PC-9 (cell line): ENCODE measurements at regions of chr2 and their contacts with region 1.

Region 1: DNA sequence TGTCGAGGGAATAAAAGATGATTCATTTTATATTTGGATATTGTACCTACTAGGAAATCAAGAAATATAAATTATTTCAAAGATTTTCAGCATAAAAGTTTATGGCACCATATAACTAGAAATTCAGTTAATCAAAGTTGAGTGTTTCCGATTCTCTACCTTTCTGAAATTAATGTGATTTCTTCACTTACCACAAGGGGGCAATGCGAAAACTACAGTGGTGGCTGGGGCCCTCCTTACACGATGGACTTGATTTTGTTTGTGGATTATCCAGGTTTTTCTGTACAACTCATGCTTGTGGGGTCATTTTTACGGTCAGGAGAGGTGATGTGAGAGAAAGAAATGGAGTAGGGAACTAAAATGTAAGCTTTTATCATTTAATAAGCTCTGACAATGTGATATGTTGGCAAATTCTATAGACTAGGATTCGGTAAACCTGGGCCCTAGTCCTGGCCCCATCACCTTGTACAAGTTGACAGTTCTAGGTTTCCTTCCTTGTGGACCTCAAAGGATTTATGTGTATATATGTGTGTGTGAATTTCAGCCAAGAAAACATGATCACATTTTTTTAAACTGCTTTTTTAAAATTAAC is 47.6 kb downstream of the G6PC2 start:
- DNase-seq: no peak
- H3K4me3 ChIP-seq: no peak overlapping the region
- H3K27ac ChIP-seq: no peak overlapping the region
- H3K4me1 ChIP-seq: no peaks in the 10 kb centered on the region
- H3K27me3 ChIP-seq: no peaks in the 10 kb centered on the region
- CTCF ChIP-seq: peak; percentile 75

Region 2: DNA sequence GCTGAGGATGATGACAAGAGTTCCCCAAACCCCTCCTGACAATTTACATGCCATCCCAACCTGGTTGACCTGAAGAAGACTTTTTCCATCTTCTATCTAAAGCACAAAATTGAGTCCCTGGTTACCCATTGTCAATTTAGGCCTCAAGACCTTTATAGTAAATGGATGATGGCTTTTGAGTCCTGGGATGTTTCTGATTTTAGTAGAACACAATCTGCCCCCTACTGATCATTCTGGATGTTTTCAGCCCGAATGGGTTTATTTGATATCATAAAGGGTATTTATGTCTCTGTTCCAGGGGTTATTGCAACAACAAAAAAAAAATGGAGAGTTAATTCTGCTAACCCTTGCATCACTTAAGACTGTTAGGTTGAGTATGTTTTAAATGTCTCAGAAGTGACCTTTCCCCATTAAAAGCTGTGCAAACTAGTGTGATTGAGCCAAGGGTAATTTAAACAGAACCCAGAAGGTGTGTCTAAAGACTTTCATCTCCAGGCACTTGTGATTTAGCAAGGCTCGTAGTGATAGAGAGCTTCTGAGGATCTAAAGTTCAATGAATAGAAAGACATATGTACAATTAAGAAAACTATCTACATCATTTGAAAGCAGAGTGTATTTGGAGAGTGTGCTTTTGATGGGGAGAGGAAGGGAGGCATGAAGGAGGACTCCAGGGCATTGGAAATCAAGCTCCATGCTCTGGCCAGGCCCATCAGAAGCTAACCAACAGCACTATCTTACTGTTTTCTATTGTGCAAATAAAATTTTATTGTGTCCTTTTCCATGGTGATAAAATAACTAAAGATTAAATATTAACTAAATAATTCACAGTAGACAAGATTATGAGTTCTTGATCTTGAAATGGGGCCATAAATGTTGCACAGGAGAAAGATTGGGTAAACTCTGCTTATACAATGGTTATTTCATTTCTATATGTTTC is 242.9 kb before region 1 on chr2:
- CTCF ChIA-PET with region 1: no interaction called
- POLR2A ChIA-PET with region 1: no interaction called
- intact Hi-C with region 1: no loop called
- DNase-seq: no peak
- H3K4me3 ChIP-seq: no peak overlapping the region
- H3K27ac ChIP-seq: no peak overlapping the region
- H3K4me1 ChIP-seq: no peaks in the 10 kb centered on the region
- H3K27me3 ChIP-seq: no peaks in the 10 kb centered on the region
- CTCF ChIP-seq: peak; percentile 44; the same call in 1 of the 2 replicates

Region 3: GRCh38 chr2:169221745-169222369 is 273.1 kb after region 1 on chr2:
- CTCF ChIA-PET with region 1: no interaction called
- POLR2A ChIA-PET with region 1: no interaction called
- intact Hi-C with region 1: loop called (anchors 5 kb)
- DNase-seq: no peak
- H3K4me3 ChIP-seq: no peak overlapping the region
- H3K27ac ChIP-seq: no peak overlapping the region
- H3K4me1 ChIP-seq: no peaks in the 10 kb centered on the region
- H3K27me3 ChIP-seq: no peaks in the 10 kb centered on the region
- CTCF ChIP-seq: peak; percentile 63